A673 (cell line): ENCODE measurements at regions of chrX and their contacts with region 1.

Region 1: GRCh38 chrX:129690435-129690834 is 35.7 kb upstream of the APLN start:
- DNase-seq: no peak
- H3K4me3 ChIP-seq: no peak overlapping the region
- H3K27ac ChIP-seq: no peak overlapping the region
- H3K4me1 ChIP-seq: no peaks in the 10 kb centered on the region
- H3K27me3 ChIP-seq: no peaks in the 10 kb centered on the region
- CTCF ChIP-seq: no peak

Region 2: DNA sequence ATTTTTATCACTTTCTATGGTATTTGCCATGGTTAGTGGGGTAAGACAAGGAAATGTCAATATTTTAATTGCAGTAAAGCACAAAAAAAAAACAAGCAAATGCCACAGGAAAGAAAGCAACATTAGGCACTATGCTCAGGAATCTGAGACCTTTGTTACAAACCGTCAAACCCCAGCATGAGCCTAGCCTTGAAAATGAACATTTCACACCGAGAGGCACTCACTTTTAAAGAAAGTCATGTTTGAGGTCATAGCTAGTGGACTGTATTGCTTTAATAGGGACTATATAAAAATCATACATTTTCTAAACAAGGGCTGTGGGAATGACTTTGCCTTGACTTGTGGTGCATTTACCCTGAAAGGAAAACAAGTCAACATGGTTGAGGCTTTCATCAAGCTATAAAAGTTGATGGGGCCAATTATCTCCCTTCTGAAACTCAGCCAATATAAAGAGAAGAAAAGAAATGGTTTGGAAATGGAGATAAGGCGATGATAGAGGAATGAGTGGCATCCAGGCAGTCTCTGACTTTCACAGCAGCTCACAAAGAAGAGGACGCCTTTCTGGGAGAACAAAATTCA is 285.9 kb before region 1 on chrX:
- CTCF ChIA-PET with region 1: no interaction called
- POLR2A ChIA-PET with region 1: no interaction called
- intact Hi-C with region 1: no loop called
- DNase-seq: no peak
- H3K4me3 ChIP-seq: no peak overlapping the region
- H3K27ac ChIP-seq: no peak overlapping the region
- H3K4me1 ChIP-seq: no peaks in the 10 kb centered on the region
- H3K27me3 ChIP-seq: no peaks in the 10 kb centered on the region
- CTCF ChIP-seq: no peak

Region 3: GRCh38 chrX:129632443-129632842 is 58.0 kb before region 1 on chrX:
- CTCF ChIA-PET with region 1: no interaction called
- POLR2A ChIA-PET with region 1: no interaction called
- intact Hi-C with region 1: no loop called
- DNase-seq: no peak
- H3K4me3 ChIP-seq: no peak overlapping the region
- H3K27ac ChIP-seq: no peak overlapping the region
- H3K4me1 ChIP-seq: no peaks in the 10 kb centered on the region
- H3K27me3 ChIP-seq: no peaks in the 10 kb centered on the region
- CTCF ChIP-seq: no peak

Region 4: DNA sequence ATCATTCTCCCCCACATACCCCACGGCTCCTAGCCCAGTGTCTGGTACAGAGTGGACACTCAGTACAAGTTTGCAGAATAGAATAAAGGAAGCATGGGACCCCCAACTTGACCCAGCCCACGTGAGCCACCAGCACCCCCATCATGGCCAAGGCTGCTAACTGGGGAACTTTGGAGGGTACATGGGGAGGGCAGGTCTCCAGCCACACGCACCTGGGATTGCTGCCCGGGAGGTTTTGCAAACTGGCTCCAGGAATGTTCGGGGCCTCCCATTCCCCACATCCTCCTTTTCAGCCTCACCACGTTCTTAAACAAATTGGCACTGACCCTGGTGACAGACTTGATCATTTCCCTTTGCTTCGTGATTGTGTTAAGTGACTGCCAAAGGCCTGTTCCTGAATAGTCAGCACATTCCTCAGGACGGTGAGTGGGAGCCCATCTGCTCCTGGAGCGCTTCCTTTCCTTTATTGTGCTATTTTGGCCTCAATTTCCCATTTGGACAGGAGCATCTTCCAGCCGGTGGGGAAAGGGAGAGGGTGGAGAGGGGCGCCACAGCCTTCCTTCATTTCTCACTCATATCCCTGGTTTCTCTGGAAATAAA is 29.6 kb after region 1 on chrX:
- CTCF ChIA-PET with region 1: no interaction called
- POLR2A ChIA-PET with region 1: no interaction called
- intact Hi-C with region 1: loop called (anchors 2 kb)
- DNase-seq: no peak
- H3K4me3 ChIP-seq: no peak overlapping the region
- H3K27ac ChIP-seq: no peak overlapping the region
- H3K4me1 ChIP-seq: no peaks in the 10 kb centered on the region
- H3K27me3 ChIP-seq: no peaks in the 10 kb centered on the region
- CTCF ChIP-seq: no peak

Region 5: DNA sequence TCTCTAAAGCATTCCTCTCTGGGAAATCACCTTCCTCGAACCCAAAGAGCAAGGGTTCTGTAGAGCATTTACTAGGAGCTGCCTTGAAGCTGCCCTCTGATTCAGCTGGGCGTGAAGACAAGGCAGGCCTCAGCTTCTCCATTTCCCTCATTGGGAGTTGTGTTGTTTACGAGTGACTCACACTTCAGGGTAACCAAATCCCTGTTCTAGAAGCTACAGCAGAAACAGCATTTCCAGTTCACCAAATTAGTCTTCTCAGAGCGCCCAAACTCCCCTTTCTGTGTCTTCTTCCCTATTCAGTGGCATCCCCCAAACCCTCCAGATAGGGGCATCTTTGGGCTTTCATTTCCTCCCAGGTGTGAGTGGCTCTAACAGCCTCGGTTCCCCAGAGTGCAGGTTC is 47.5 kb after region 1 on chrX:
- CTCF ChIA-PET with region 1: no interaction called
- POLR2A ChIA-PET with region 1: interaction called, 11 read pairs
- intact Hi-C with region 1: no loop called
- DNase-seq: no peak
- H3K4me3 ChIP-seq: no peak overlapping the region
- H3K27ac ChIP-seq: no peak overlapping the region
- H3K4me1 ChIP-seq: no peaks in the 10 kb centered on the region
- H3K27me3 ChIP-seq: no peaks in the 10 kb centered on the region
- CTCF ChIP-seq: no peak